ENCODE measurements at regions of chr5 and their contacts with region 1.

Region 1: DNA sequence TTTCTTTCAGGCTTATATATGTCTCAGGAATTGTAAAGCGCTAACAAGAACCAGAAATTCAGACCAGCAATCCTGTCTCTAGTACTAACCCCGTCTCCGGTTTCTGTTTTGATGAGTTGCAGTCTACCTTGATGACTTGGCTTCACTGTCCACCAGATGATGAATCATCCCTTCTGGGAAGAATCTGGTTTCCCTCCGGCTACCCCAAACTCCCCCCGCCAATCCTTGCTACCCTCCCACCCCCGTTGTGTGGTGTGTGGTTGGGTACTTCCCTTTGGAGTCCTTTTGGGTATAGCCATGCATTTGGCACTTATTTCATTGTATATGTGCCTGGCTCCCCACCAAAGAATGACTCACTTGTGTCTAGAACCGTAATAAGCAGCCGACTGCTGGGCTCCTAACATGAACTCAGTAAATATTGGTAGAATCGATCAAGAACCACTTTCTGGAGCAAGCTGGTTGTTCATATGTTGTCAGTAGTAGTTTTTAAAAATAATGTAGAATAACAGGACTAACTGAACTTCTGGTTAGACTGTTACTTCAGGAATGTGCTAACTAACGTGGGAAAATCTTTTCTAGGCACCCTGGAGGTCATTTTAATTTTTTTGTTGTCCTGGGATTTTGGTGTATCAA is 8.3 kb upstream of the TGFBI start:
- DNase-seq: peak; percentile 100
- H3K4me3 ChIP-seq: no peak overlapping the region
- H3K27ac ChIP-seq: peak overlapping the region; percentile 91
- H3K4me1 ChIP-seq: peaks cover 63% of the 10 kb centered on the region
- H3K27me3 ChIP-seq: no peaks in the 10 kb centered on the region
- CTCF ChIP-seq: no peak

Region 2: GRCh38 chr5:135829681-135830383 is 190.7 kb before region 1 on chr5:
- CTCF ChIA-PET with region 1: no interaction called
- dilution Hi-C with region 1: no loop called
- in situ Hi-C with region 1: no loop called
- intact Hi-C with region 1: no loop called
- DNase-seq: peak; percentile 35
- H3K4me3 ChIP-seq: no peak overlapping the region
- H3K27ac ChIP-seq: no peak overlapping the region
- H3K4me1 ChIP-seq: peaks cover 5% of the 10 kb centered on the region
- H3K27me3 ChIP-seq: peaks cover 4% of the 10 kb centered on the region
- CTCF ChIP-seq: peak; percentile 83 to 87

Region 3: GRCh38 chr5:135977375-135977928 is 43.0 kb before region 1 on chr5:
- CTCF ChIA-PET with region 1: no interaction called
- dilution Hi-C with region 1: loop called (anchors 5 kb)
- in situ Hi-C with region 1: no loop called
- intact Hi-C with region 1: no loop called
- DNase-seq: peak; percentile 16
- H3K4me3 ChIP-seq: no peak overlapping the region
- H3K27ac ChIP-seq: no peak overlapping the region
- H3K4me1 ChIP-seq: peaks cover 8% of the 10 kb centered on the region
- H3K27me3 ChIP-seq: no peaks in the 10 kb centered on the region
- CTCF ChIP-seq: peak; percentile 85 to 86

Region 4: GRCh38 chr5:136006761-136007251 is 13.7 kb before region 1 on chr5:
- CTCF ChIA-PET with region 1: no interaction called
- dilution Hi-C with region 1: no loop called
- in situ Hi-C with region 1: no loop called
- intact Hi-C with region 1: loop called (anchors 1 kb)
- DNase-seq: peak; percentile 96
- H3K4me3 ChIP-seq: no peak overlapping the region
- H3K27ac ChIP-seq: peak overlapping the region; percentile 82
- H3K4me1 ChIP-seq: peaks cover 50% of the 10 kb centered on the region
- H3K27me3 ChIP-seq: no peaks in the 10 kb centered on the region
- CTCF ChIP-seq: no peak

Region 5: DNA sequence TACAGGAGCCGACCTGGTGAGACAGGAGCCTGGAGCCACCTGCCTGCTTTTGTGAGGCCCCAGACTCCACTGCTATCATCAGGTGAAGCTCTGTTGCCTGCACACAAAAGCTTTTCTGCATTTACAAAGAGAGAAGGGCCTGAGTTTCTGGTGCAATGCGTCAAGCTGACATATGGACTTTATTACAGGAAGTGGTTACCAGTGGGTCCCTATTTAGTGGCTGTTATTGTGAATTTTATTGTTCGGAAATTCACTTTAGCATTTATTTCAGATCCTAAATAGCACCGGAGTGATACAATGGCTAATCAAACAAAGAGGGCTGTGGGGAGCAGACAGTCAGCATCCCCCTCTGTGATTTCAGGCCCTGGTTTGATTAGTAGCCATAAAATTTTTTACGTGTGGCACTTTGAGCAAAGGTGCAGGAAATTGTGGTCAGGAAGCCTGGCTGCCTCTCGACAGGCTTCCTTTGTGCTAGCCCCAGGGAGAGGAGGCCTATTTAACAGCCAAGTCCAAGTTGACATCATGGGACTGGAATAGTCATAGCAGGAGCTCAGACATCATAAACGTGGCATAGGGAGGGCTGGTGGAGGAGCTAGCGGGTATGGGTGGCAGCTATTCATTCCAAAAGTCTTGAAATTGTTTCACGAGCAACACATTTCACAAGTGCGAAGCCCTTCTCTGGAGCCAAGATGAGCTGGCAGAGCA is 16.7 kb after region 1 on chr5:
- CTCF ChIA-PET with region 1: no interaction called
- dilution Hi-C with region 1: no loop called
- in situ Hi-C with region 1: no loop called
- intact Hi-C with region 1: loop called (anchors 2 kb)
- DNase-seq: peak; percentile 91
- H3K4me3 ChIP-seq: no peak overlapping the region
- H3K27ac ChIP-seq: peak overlapping the region; percentile 66
- H3K4me1 ChIP-seq: peaks cover 56% of the 10 kb centered on the region
- H3K27me3 ChIP-seq: no peaks in the 10 kb centered on the region
- CTCF ChIP-seq: no peak